Caco-2 (cell line): ENCODE measurements at regions of chr2 and their contacts with region 1.

Region 1: DNA sequence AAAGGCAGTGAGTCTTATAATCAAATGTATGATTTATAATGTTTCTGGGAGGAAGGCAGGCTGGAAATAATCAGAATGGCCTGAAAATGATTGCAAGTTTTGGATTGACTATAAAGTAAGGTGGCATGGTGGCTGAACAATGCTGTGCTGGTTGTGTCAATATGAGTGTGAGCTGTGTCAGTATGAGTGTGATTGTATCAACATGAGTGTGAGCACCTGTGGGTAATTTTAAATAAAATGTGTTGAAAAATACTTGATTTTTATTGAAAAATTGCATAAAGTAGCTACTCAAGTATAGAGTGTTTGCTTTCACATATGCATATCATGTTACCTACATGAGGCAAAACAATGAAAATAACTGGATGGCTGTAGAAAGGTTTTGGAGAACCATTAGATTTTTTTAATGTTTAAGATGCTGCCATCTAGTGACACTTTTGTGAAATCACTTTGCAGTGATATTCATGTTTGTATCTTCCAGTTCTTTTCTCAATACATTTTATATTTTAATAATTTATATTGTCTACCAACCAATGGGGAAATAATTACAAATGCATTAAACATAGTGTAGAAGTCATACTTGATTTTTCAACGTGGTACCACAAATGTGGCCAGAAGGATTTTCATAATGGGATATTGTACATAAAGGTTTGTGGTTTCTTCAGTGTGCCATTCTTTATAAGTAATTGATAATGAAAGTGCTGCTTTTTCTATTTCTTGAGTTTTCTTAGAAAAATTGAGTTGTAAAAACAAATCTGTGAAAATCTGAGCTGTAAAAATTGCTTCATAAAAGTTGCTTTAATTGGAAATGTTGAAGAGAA is 103.3 kb downstream of the KYNU start:
- DNase-seq: peak in 1 of 2 experiments; percentile 24
- H3K4me3 ChIP-seq: no peak overlapping the region
- H3K4me3 Mint-ChIP-seq: peak overlapping the region; percentile 64
- H3K27ac Mint-ChIP-seq: peak overlapping the region; percentile 95
- H3K4me1 ChIP-seq: peaks cover 37% of the 10 kb centered on the region
- H3K4me1 Mint-ChIP-seq: peaks cover 16% of the 10 kb centered on the region
- H3K27me3 ChIP-seq: no peaks in the 10 kb centered on the region
- H3K27me3 Mint-ChIP-seq: no peaks in the 10 kb centered on the region
- CTCF ChIP-seq: peak; percentile 38 to 76

Region 2: DNA sequence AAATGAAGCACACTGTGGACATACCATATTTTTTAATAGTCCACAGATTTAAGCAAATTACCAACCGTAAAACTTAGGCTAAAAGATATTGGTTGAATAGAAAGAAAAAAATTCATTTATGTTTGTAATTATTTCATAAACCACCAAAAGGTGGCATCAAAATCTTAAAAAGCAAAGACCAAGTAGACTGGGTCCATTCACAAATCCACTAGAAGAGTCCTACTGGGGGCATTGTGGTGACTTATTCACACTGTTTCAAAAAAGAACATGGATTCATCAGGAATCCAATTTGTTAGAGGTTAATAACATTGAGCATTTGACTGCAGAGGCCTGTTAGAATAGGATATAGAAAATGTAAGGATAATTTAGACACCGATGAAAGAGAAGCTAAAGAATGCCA is 298.2 kb before region 1 on chr2:
- CTCF ChIA-PET with region 1: no interaction called
- POLR2A ChIA-PET with region 1: no interaction called
- intact Hi-C with region 1: loop called (anchors 1 kb)
- DNase-seq: peak in 1 of 2 experiments; percentile 5
- H3K4me3 ChIP-seq: no peak overlapping the region
- H3K4me3 Mint-ChIP-seq: no peak overlapping the region
- H3K27ac Mint-ChIP-seq: no peak overlapping the region
- H3K4me1 ChIP-seq: no peaks in the 10 kb centered on the region
- H3K4me1 Mint-ChIP-seq: no peaks in the 10 kb centered on the region
- H3K27me3 ChIP-seq: no peaks in the 10 kb centered on the region
- H3K27me3 Mint-ChIP-seq: no peaks in the 10 kb centered on the region
- CTCF ChIP-seq: no peak

Region 3: DNA sequence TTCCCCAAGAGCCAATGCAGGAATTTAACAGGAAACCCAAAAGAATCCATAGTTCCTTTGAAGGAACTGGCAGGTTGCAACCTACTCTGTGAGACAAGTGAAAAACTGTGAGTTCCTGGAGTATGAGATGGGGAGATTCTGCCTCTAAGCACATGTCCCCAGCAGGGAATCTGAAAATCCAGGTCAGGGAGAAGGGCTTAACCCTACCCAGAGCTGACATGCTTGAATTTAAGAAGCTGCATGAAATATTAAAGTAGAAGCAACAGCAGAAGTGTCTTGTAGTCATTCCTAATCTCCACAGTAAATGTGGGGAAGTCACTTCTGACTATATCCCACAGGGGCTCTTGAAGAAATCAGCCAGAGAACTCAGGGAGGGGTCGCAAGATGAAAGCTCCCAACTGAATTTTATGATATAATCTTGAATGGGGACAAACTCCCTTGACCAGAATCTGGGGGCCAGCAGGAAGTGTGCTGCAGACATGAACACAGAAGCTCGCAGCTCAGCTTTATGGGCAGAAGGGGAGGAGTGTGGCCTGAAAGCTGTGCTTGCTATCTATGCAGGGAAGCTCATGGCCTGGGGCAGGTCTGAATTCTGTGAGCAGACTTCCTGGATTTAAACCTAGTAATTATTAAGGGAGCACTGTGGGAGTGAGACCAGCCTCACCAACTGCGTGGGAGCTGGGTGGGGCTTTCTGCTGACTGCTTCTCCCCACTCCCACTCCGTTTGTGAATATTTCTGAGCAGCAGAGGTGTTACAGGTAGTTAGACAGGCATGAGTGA is 287.4 kb before region 1 on chr2:
- CTCF ChIA-PET with region 1: no interaction called
- POLR2A ChIA-PET with region 1: no interaction called
- intact Hi-C with region 1: loop called (anchors 1 kb)
- DNase-seq: peak in 1 of 2 experiments; percentile 46
- H3K4me3 ChIP-seq: no peak overlapping the region
- H3K4me3 Mint-ChIP-seq: no peak overlapping the region
- H3K27ac Mint-ChIP-seq: no peak overlapping the region
- H3K4me1 ChIP-seq: peaks cover 45% of the 10 kb centered on the region
- H3K4me1 Mint-ChIP-seq: peaks cover 21% of the 10 kb centered on the region
- H3K27me3 ChIP-seq: no peaks in the 10 kb centered on the region
- H3K27me3 Mint-ChIP-seq: no peaks in the 10 kb centered on the region
- CTCF ChIP-seq: no peak

Region 4: GRCh38 chr2:142796161-142796560 is 184.6 kb before region 1 on chr2:
- CTCF ChIA-PET with region 1: interaction called, 6 read pairs
- POLR2A ChIA-PET with region 1: no interaction called
- intact Hi-C with region 1: loop called (anchors 1 kb)
- DNase-seq: peak in 1 of 2 experiments; percentile 6
- H3K4me3 ChIP-seq: no peak overlapping the region
- H3K4me3 Mint-ChIP-seq: no peak overlapping the region
- H3K27ac Mint-ChIP-seq: no peak overlapping the region
- H3K4me1 ChIP-seq: no peaks in the 10 kb centered on the region
- H3K4me1 Mint-ChIP-seq: no peaks in the 10 kb centered on the region
- H3K27me3 ChIP-seq: no peaks in the 10 kb centered on the region
- H3K27me3 Mint-ChIP-seq: no peaks in the 10 kb centered on the region
- CTCF ChIP-seq: peak in 1 of 2 experiments; percentile 19

Region 5: GRCh38 chr2:142877216-142877756 is 103.5 kb before region 1 on chr2 and contains the start of gene KYNU:
- CTCF ChIA-PET with region 1: no interaction called
- POLR2A ChIA-PET with region 1: no interaction called
- intact Hi-C with region 1: loop called (anchors 1 kb)
- DNase-seq: no peak
- H3K4me3 ChIP-seq: no peak within 1 kb of the TSS
- H3K4me3 Mint-ChIP-seq: peak within 1 kb of the TSS; percentile 9
- H3K27ac Mint-ChIP-seq: no peak within 1 kb of the TSS
- H3K4me1 ChIP-seq: peaks cover 45% of the 10 kb centered on the region
- H3K4me1 Mint-ChIP-seq: peaks cover 39% of the 10 kb centered on the region
- H3K27me3 ChIP-seq: no peaks in the 10 kb centered on the region
- H3K27me3 Mint-ChIP-seq: no peaks in the 10 kb centered on the region
- CTCF ChIP-seq: no peak
- total RNA-seq, gene KYNU: 4.3 and 5.2 TPM in 2 replicates

Region 6: GRCh38 chr2:142914507-142915313 is 66.1 kb before region 1 on chr2:
- CTCF ChIA-PET with region 1: no interaction called
- POLR2A ChIA-PET with region 1: no interaction called
- intact Hi-C with region 1: loop called (anchors 1 kb)
- DNase-seq: no peak
- H3K4me3 ChIP-seq: no peak overlapping the region
- H3K4me3 Mint-ChIP-seq: no peak overlapping the region
- H3K27ac Mint-ChIP-seq: no peak overlapping the region
- H3K4me1 ChIP-seq: peaks cover 13% of the 10 kb centered on the region
- H3K4me1 Mint-ChIP-seq: peaks cover 9% of the 10 kb centered on the region
- H3K27me3 ChIP-seq: no peaks in the 10 kb centered on the region
- H3K27me3 Mint-ChIP-seq: no peaks in the 10 kb centered on the region
- CTCF ChIP-seq: no peak

Region 7: GRCh38 chr2:143051465-143051864 is 70.7 kb after region 1 on chr2:
- CTCF ChIA-PET with region 1: no interaction called
- POLR2A ChIA-PET with region 1: no interaction called
- intact Hi-C with region 1: no loop called
- DNase-seq: no peak
- H3K4me3 ChIP-seq: no peak overlapping the region
- H3K4me3 Mint-ChIP-seq: no peak overlapping the region
- H3K27ac Mint-ChIP-seq: no peak overlapping the region
- H3K4me1 ChIP-seq: no peaks in the 10 kb centered on the region
- H3K4me1 Mint-ChIP-seq: no peaks in the 10 kb centered on the region
- H3K27me3 ChIP-seq: no peaks in the 10 kb centered on the region
- H3K27me3 Mint-ChIP-seq: no peaks in the 10 kb centered on the region
- CTCF ChIP-seq: no peak

Region 8: GRCh38 chr2:143787674-143788073 is 806.9 kb after region 1 on chr2:
- CTCF ChIA-PET with region 1: no interaction called
- POLR2A ChIA-PET with region 1: no interaction called
- intact Hi-C with region 1: no loop called
- DNase-seq: no peak
- H3K4me3 ChIP-seq: no peak overlapping the region
- H3K4me3 Mint-ChIP-seq: no peak overlapping the region
- H3K27ac Mint-ChIP-seq: no peak overlapping the region
- H3K4me1 ChIP-seq: no peaks in the 10 kb centered on the region
- H3K4me1 Mint-ChIP-seq: no peaks in the 10 kb centered on the region
- H3K27me3 ChIP-seq: no peaks in the 10 kb centered on the region
- H3K27me3 Mint-ChIP-seq: peaks cover 2% of the 10 kb centered on the region
- CTCF ChIP-seq: no peak